Activated CD4-positive, alpha-beta memory T cell treated with anti-CD3 and anti-CD28 coated beads, Interleukin-2, amount 10 ng/mL, durations not matched to agents 7 days and 5 days (primary cell): ENCODE measurements at regions of chr1 and their contacts with region 1.

Region 1: DNA sequence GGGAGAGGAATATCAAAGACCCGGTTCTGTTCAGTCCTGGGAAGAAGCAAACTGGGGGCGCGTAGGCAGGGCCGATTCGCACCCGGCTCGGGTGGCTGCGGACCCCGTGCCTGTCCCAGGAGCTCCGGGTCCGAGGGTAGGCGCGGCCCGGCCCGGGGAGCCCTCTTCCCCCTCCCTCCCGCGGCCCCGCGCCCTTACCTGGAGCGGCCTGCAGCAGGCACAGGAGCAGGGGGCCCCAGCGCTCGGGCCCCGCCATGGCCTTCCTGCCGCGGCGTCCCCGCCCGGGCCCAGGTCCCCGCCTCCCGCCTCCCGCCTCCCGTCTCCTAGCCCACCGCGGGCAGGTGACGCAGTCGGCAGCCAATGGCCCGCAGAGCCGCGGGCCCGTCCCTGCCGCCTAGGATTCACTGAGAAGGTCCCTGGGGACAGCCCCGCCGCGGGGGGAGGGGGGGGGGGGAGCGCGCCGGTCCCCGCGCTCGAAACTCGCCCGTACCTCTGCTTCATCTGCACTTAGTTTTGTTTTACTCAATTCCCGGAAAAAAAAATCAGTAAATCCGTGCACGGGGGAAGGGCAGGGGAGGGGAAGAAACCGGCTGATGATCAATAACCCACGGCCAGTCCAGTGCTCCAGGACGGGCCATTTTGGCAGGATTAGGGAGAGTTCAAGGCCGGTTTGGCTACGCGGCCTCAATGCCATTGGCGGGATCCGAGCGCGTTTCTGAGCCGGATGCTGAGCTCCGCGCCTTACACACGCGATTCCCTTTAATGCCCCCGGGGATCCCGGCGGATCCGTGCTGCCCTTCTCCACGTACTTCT is at the start of gene IFNLR1:
- DNase-seq: peak; percentile 79
- H3K4me3 Mint-ChIP-seq: peak within 1 kb of the TSS; percentile 79
- H3K27ac Mint-ChIP-seq: peak within 1 kb of the TSS; percentile 38
- H3K4me1 Mint-ChIP-seq: peaks cover 50% of the 10 kb centered on the region
- H3K27me3 Mint-ChIP-seq: peaks cover 2% of the 10 kb centered on the region
- total RNA-seq, gene IFNLR1: 6.0 to 6.1 TPM

Region 2: DNA sequence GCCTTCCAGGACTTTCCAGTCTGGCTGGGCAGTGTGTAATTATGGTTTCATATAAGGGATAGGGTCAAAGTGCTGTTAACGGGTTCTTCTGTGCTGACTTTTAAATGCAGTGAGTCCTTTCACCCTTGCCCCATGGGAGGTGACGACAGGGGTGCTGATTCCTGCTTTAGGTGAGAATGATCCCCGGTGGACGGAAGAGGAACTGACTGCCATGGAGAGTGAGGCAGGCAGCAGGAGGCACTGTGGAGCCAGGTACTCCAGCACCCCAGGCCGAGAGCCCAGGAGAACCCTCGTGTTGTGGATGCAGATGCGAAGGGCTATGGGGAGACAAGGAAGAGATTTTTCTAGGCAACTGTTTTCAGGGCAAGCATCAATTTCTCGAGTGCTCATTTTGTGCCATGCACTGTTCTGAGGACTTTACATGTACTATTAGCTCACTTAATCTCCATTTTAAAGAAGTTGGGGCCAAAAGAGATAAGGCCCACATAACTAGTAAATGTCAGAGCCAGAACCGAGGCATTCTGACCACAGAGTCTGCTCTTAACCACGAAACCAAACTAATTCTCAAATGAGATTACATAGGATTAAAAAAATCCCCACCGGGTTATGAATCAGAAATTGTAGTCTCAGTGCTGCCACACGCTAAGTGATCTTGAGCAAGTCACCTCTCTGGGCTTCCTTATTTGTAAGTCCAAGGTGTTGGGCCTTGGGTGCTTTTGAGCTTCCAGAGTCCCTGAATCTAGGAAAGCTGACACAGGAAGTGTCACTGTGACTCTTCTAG is 198.2 kb after region 1 on chr1:
- CTCF ChIA-PET with region 1: interaction called, 40 read pairs
- POLR2A ChIA-PET with region 1: interaction called, 25 read pairs
- DNase-seq: peak; percentile 49
- H3K4me3 Mint-ChIP-seq: no peak overlapping the region
- H3K27ac Mint-ChIP-seq: peak overlapping the region; percentile 82
- H3K4me1 Mint-ChIP-seq: peaks cover 36% of the 10 kb centered on the region
- H3K27me3 Mint-ChIP-seq: no peaks in the 10 kb centered on the region